ENCODE measurements at regions of chr12 and their contacts with region 1.

Region 1: DNA sequence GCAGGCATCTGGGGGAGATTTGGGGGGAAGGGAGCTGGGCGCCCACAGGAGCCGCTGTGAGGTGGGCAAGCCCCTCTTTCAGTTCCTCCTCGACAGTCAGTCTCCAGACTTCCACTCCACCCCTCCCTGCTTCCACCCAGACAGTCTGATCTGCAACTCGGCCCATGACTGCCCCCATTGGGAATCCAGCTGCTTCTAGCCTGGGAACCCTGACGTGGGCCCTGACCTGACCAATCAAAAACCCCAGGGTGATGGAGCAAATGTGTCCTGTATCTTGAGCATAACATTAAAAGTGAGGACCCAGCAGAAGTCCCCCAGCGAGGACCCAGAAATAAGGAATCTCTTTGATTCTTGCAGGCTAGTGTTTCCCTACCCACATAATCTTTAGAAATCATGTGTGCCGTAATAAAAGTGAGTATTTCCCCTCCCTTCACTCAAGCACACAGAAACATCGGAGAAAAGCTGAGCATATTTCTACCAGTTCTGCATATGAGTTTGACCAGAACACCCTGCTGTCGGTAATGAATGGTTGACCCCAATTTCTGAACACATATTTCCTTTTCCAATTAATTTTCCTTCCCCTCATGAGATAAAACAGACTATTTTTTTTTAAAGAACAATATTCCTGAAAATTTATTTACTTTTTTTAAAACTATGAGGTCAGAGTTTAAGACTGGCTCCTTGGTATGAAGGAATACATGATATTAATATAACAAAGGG is 6.4 kb downstream of the SSH1 start:
- DNase-seq: peak; percentile 77 to 88 (median 85)
- ATAC-seq: peak in 3 of 4 donors; percentile 45 to 67 (median 54)
- H3K4me3 ChIP-seq: peak overlapping the region in 3 of 12 donors; percentile 23 to 38 (median 37)
- H3K27ac ChIP-seq: peak overlapping the region in 11 of 12 donors; percentile 46 to 99 (median 96)
- H3K4me1 ChIP-seq: peaks cover 17 to 98% (median 85%) of the 10 kb centered on the region in 12 donors
- H3K27me3 ChIP-seq: no peaks in the 10 kb centered on the region
- CTCF ChIP-seq: peak in 5 of 12 donors; percentile 15 to 45 (median 24)
- POLR2A ChIP-seq: peak in 1 of 2 donors; percentile 17

Region 2: DNA sequence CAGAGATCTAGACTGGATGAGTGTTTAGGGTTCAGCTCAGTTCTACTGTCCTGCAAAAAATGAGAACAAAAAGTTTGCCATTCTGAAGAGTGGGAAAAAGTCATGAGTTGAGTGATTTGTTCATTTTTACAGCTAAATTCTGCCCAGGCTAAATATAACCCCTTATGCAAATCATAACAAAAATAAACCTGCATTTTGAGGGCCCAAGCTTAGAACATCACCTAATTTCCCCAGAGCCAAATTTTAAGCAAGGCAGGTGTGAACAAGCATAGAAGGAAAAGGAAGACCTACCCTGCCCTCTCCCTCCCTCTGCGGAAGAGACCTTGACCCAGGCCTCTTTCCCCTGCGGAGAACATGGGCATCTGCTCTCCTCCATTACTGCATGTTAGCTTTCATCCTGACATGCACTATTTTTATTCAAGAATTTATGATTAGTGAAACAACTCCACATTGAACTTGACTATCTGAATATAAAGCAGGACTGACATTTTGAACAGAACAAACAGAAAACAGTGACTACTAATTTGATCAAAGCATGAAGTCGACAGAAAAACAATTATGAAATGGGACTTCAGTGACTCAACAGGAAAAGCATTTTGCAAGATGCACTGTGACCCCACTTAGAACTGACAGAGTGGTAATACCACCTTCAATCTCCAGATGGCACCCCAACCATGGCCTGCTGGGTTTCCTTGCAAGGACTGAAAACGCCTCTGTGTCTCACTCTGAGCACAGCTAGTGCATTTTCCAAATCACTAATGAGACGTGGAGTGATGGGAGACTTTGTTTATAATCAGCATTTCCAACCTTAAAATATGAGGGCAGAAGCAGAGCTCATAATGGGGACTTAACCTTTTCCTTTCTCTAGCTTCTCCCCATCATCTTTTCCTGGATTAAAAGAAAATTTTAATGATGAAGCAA is 186.4 kb before region 1 on chr12:
- intact Hi-C with region 1: loop called in 6 of 10 experiments (anchors 5 kb)
- DNase-seq: peak; percentile 76 to 87 (median 84)
- ATAC-seq: peak; percentile 85 to 93 (median 92)
- H3K4me3 ChIP-seq: peak overlapping the region in 1 of 12 donors; percentile 12
- H3K27ac ChIP-seq: peak overlapping the region; percentile 62 to 88 (median 80)
- H3K4me1 ChIP-seq: peaks cover 17 to 60% (median 50%) of the 10 kb centered on the region in 12 donors
- H3K27me3 ChIP-seq: no peaks in the 10 kb centered on the region
- CTCF ChIP-seq: peak; percentile 88 to 98 (median 96)
- POLR2A ChIP-seq: peak in 1 of 2 donors; percentile 28

Region 3: GRCh38 chr12:108816652-108817335 is 34.2 kb before region 1 on chr12:
- intact Hi-C with region 1: loop called in 3 of 10 experiments (anchors 5 kb)
- DNase-seq: peak in 2 of 5 donors; percentile 70 to 78
- ATAC-seq: peak; percentile 45 to 71 (median 56)
- H3K4me3 ChIP-seq: no peak overlapping the region
- H3K27ac ChIP-seq: peak overlapping the region in 8 of 12 donors; percentile 33 to 62 (median 48)
- H3K4me1 ChIP-seq: peaks cover 5 to 79% (median 66%) of the 10 kb centered on the region in 12 donors
- H3K27me3 ChIP-seq: no peaks in the 10 kb centered on the region
- CTCF ChIP-seq: peak in 2 of 12 donors; percentile 6 to 14
- POLR2A ChIP-seq: no peak

Region 4: GRCh38 chr12:108939594-108939993 is 88.6 kb after region 1 on chr12:
- intact Hi-C with region 1: no loop called
- DNase-seq: no peak
- ATAC-seq: peak; percentile 26 to 86 (median 81)
- H3K4me3 ChIP-seq: no peak overlapping the region
- H3K27ac ChIP-seq: no peak overlapping the region
- H3K4me1 ChIP-seq: no peaks in the 10 kb centered on the region
- H3K27me3 ChIP-seq: no peaks in the 10 kb centered on the region
- CTCF ChIP-seq: no peak
- POLR2A ChIP-seq: no peak

Region 5: GRCh38 chr12:109239179-109239578 is 388.2 kb after region 1 on chr12:
- intact Hi-C with region 1: no loop called
- DNase-seq: no peak
- ATAC-seq: no peak
- H3K4me3 ChIP-seq: no peak overlapping the region
- H3K27ac ChIP-seq: no peak overlapping the region
- H3K4me1 ChIP-seq: no peaks in the 10 kb centered on the region
- H3K27me3 ChIP-seq: no peaks in the 10 kb centered on the region
- CTCF ChIP-seq: no peak
- POLR2A ChIP-seq: no peak

Measured in heart left ventricle (tissue), 16 donors.